Activated CD4-positive, alpha-beta memory T cell treated with anti-CD3 and anti-CD28 coated beads for 36 hours (primary cell): ENCODE measurements at regions of chr6 and their contacts with region 1.

Region 1: GRCh38 chr6:143510991-143511891 is at the start of gene FUCA2:
- DNase-seq: peak; percentile 84
- H3K4me3 Mint-ChIP-seq: peak within 1 kb of the TSS; percentile 91
- H3K27ac Mint-ChIP-seq: peak within 1 kb of the TSS; percentile 93
- H3K4me1 Mint-ChIP-seq: peaks cover 28% of the 10 kb centered on the region
- H3K27me3 Mint-ChIP-seq: no peaks in the 10 kb centered on the region
- total RNA-seq, gene FUCA2: 16.5 to 16.8 TPM

Region 2: GRCh38 chr6:143441680-143442545 is 69.3 kb before region 1 on chr6:
- CTCF ChIA-PET with region 1: interaction called, 5 read pairs
- POLR2A ChIA-PET with region 1: no interaction called
- intact Hi-C with region 1: loop called (anchors 2 kb)
- DNase-seq: no peak
- H3K4me3 Mint-ChIP-seq: no peak overlapping the region
- H3K27ac Mint-ChIP-seq: peak overlapping the region; percentile 54
- H3K4me1 Mint-ChIP-seq: peaks cover 44% of the 10 kb centered on the region
- H3K27me3 Mint-ChIP-seq: no peaks in the 10 kb centered on the region

Region 3: DNA sequence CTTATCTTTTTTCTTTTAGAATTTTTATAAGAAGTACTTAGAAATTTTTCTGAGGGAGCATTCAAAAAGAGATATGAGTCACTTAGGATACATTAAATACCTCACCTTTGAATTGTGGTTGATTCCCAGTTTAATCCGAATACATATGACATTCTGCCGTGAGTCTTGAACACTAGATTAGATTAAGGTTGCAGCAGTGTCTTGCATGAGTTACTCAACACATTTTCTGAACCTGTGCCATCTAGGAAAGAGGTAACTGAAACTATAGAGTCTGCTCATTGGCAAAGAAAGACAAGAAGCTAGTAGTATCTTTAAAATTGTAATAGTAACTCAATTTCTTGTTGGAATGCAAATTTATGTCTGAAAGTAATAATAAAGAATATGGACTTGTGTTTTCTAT is 45.7 kb before region 1 on chr6:
- CTCF ChIA-PET with region 1: no interaction called
- POLR2A ChIA-PET with region 1: no interaction called
- intact Hi-C with region 1: no loop called
- DNase-seq: no peak
- H3K4me3 Mint-ChIP-seq: no peak overlapping the region
- H3K27ac Mint-ChIP-seq: no peak overlapping the region
- H3K4me1 Mint-ChIP-seq: no peaks in the 10 kb centered on the region
- H3K27me3 Mint-ChIP-seq: no peaks in the 10 kb centered on the region

Region 4: DNA sequence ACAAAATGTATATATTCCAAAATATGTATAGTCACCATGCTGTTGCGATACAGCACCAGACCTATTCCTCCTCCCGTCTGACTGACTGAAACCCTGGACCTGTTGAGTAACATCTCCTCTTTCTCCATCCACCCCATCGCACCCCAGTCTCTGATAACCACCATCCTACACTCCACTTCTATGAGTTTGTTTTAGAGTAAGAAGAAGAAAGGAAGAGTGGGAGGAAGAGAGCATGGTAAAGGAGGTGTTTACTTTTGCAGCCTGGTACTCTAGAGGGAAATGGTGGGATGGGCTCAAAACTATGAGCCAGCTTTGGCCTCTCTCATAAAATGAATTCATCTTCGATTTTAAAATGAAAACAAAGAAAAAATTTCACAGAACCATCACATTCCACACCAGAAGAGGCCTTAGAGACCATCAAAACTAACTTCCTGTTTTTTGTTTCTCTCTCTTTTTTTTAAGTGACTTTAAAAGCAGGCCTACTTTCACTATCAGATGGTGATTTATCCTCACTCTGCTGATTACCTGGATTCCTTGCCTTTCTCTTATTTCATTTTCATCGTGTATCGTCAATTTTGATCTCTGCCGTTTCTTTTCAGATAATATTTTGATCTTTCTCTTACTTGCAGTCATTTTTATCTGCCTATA is 17.0 kb after region 1 on chr6:
- CTCF ChIA-PET with region 1: interaction called, 10 read pairs
- POLR2A ChIA-PET with region 1: no interaction called
- intact Hi-C with region 1: loop called (anchors 1 kb)
- DNase-seq: no peak
- H3K4me3 Mint-ChIP-seq: peak overlapping the region; percentile 16
- H3K27ac Mint-ChIP-seq: peak overlapping the region; percentile 53
- H3K4me1 Mint-ChIP-seq: peaks cover 13% of the 10 kb centered on the region
- H3K27me3 Mint-ChIP-seq: no peaks in the 10 kb centered on the region

Region 5: GRCh38 chr6:143569040-143569439 is 57.8 kb after region 1 on chr6:
- CTCF ChIA-PET with region 1: interaction called, 6 read pairs
- POLR2A ChIA-PET with region 1: interaction called, 4 read pairs
- intact Hi-C with region 1: loop called (anchors 1 kb)
- DNase-seq: peak; percentile 13
- H3K4me3 Mint-ChIP-seq: no peak overlapping the region
- H3K27ac Mint-ChIP-seq: no peak overlapping the region
- H3K4me1 Mint-ChIP-seq: peaks cover 43% of the 10 kb centered on the region
- H3K27me3 Mint-ChIP-seq: no peaks in the 10 kb centered on the region

Region 6: GRCh38 chr6:143842902-143843676 is 331.8 kb after region 1 on chr6 and contains the start of gene LTV1:
- CTCF ChIA-PET with region 1: interaction called, 7 read pairs
- POLR2A ChIA-PET with region 1: interaction called, 4 read pairs
- intact Hi-C with region 1: loop called (anchors 1 kb)
- DNase-seq: peak; percentile 96
- H3K4me3 Mint-ChIP-seq: peak within 1 kb of the TSS; percentile 93
- H3K27ac Mint-ChIP-seq: peak within 1 kb of the TSS; percentile 93
- H3K4me1 Mint-ChIP-seq: peaks cover 25% of the 10 kb centered on the region
- H3K27me3 Mint-ChIP-seq: no peaks in the 10 kb centered on the region
- total RNA-seq, gene LTV1: 33.5 to 35.4 TPM

Region 7: GRCh38 chr6:144095331-144096002 is 584.2 kb after region 1 on chr6 and contains the start of gene SF3B5:
- CTCF ChIA-PET with region 1: no interaction called
- POLR2A ChIA-PET with region 1: no interaction called
- intact Hi-C with region 1: loop called (anchors 1 kb)
- DNase-seq: peak; percentile 99
- H3K4me3 Mint-ChIP-seq: peak within 1 kb of the TSS; percentile 93
- H3K27ac Mint-ChIP-seq: peak within 1 kb of the TSS; percentile 96
- H3K4me1 Mint-ChIP-seq: peaks cover 25% of the 10 kb centered on the region
- H3K27me3 Mint-ChIP-seq: no peaks in the 10 kb centered on the region
- total RNA-seq, gene SF3B5: 162 to 171 TPM